ENCODE measurements at regions of chr4 and their contacts with region 1.

Region 1: GRCh38 chr4:102344954-102345794 is at the start of gene SLC39A8:
- DNase-seq: peak; percentile 96
- H3K4me3 Mint-ChIP-seq: peak within 1 kb of the TSS; percentile 88
- H3K27ac Mint-ChIP-seq: peak within 1 kb of the TSS; percentile 99
- H3K4me1 Mint-ChIP-seq: peaks cover 39% of the 10 kb centered on the region
- H3K27me3 Mint-ChIP-seq: peaks cover 7% of the 10 kb centered on the region
- total RNA-seq, gene SLC39A8: 80.4 and 81.2 TPM in 2 replicates

Region 2: GRCh38 chr4:101328063-101328602 is 1017.0 kb before region 1 on chr4:
- intact Hi-C with region 1: loop called (anchors 5 kb)
- DNase-seq: peak; percentile 76
- H3K4me3 Mint-ChIP-seq: peak overlapping the region; percentile 68
- H3K27ac Mint-ChIP-seq: peak overlapping the region; percentile 54
- H3K4me1 Mint-ChIP-seq: peaks cover 18% of the 10 kb centered on the region
- H3K27me3 Mint-ChIP-seq: peaks cover 37% of the 10 kb centered on the region

Region 3: DNA sequence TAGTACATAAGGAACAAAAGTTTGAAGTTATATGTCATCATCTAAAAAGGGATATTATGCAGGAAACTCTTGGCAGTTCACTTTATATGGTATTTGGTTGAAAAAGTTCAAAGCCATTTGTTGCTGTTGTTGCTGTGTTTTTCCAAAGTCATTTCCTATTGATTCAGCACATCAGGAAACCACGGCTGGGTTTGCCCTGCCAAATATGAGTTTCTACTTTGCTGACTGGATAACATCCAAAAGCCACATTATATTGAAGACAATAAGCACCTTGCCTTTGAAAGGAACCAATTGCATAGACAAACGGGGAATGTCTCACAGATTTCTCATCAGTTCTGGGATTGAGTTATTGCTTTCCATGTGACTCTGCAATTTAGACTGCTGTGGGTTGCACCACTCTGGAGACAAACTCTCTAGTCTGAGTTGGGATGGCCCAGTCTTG is 206.0 kb before region 1 on chr4:
- intact Hi-C with region 1: no loop called
- DNase-seq: no peak
- H3K4me3 Mint-ChIP-seq: no peak overlapping the region
- H3K27ac Mint-ChIP-seq: no peak overlapping the region
- H3K4me1 Mint-ChIP-seq: no peaks in the 10 kb centered on the region
- H3K27me3 Mint-ChIP-seq: peaks cover 5% of the 10 kb centered on the region

Region 4: DNA sequence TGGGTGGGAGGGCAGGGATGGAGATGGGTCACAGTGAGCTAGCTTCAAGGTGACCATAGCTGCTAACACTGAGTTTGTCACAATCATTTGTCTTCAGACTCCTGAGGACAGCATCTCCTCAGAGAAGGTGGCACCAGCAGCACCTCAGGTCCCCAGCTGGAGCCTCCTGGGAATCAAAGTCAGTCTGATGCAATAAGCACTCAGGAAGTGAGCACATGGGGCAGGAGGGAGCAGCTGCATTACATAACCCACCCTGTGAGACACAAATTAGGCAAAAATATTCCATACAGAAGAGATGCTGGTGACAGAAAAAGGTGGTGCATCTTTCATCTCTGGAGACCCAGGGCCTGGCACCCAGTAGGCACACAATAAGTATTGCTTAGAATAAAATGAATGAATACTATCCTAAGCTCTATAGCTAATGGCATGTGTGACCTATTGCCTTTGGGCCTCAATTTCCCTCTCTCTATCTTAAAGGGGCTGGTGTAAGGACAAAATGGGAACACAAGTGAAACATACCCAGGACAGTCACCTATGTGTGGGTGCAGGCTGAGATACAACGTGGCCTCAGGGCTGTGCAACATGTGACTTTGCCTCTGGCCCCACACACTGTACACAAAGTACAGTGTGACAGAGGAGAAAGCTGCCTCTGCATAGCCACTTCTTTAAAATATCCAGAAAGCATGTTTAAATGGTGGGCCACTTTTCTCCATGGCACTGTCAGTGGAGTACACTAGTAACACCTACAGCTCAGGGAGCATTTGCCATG is 37.0 kb before region 1 on chr4:
- intact Hi-C with region 1: loop called (anchors 5 kb)
- DNase-seq: peak; percentile 53
- H3K4me3 Mint-ChIP-seq: no peak overlapping the region
- H3K27ac Mint-ChIP-seq: peak overlapping the region; percentile 49
- H3K4me1 Mint-ChIP-seq: peaks cover 21% of the 10 kb centered on the region
- H3K27me3 Mint-ChIP-seq: no peaks in the 10 kb centered on the region

Region 5: GRCh38 chr4:102500696-102501446 is 155.7 kb after region 1 on chr4 and contains the start of gene NFKB1:
- intact Hi-C with region 1: loop called (anchors 1 kb)
- DNase-seq: peak; percentile 95
- H3K4me3 Mint-ChIP-seq: peak within 1 kb of the TSS; percentile 95
- H3K27ac Mint-ChIP-seq: peak within 1 kb of the TSS; percentile 95
- H3K4me1 Mint-ChIP-seq: peaks cover 22% of the 10 kb centered on the region
- H3K27me3 Mint-ChIP-seq: no peaks in the 10 kb centered on the region
- total RNA-seq, gene NFKB1: 146 and 148 TPM in 2 replicates

Region 6: GRCh38 chr4:102535398-102536082 is 190.4 kb after region 1 on chr4:
- intact Hi-C with region 1: no loop called
- DNase-seq: no peak
- H3K4me3 Mint-ChIP-seq: peak overlapping the region; percentile 20
- H3K27ac Mint-ChIP-seq: peak overlapping the region; percentile 37
- H3K4me1 Mint-ChIP-seq: peaks cover 40% of the 10 kb centered on the region
- H3K27me3 Mint-ChIP-seq: no peaks in the 10 kb centered on the region

Region 7: DNA sequence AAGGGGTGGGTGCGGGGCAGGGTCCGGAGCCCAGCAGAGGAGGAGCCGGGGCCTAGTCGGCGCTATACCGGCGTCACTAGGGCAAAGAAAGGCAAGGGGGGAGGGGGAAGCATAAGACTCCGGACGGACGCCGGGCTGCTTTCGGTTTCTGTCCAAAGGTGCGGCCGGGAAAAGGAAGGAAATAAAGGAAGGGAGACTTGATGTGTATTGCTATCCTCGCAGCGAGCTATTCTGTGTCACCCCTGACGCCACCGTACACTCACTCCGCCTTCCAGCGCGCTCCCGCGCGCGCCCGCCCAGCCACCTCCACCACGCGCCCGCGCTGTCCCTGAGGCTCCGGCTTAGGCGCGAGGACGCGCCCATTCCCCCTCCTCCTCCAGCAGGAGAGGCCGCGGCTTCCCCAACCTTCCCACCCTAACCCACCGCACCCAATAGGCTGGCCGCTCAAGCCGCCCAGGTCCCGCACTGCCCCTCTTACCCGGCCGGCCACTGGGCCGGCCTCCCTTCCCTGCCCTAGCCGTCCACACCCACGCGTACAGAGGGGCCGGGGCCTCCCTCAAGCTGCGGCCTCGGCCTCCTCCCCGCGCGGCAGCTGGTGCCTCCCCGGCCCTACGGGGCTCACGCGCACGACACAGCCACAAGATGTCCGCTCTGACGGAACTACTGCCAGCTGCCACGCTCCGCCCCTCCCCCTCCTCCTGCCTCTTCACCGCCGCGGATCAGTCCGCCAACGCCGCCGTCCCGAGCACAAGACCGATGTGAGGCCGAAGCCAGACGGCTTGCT is 481.9 kb after region 1 on chr4 and contains the start of gene UBE2D3:
- intact Hi-C with region 1: loop called (anchors 1 kb)
- DNase-seq: peak; percentile 98
- H3K4me3 Mint-ChIP-seq: no peak within 1 kb of the TSS
- H3K27ac Mint-ChIP-seq: no peak within 1 kb of the TSS
- H3K4me1 Mint-ChIP-seq: peaks cover 31% of the 10 kb centered on the region
- H3K27me3 Mint-ChIP-seq: no peaks in the 10 kb centered on the region
- total RNA-seq, gene UBE2D3: 488 TPM in 2 replicates

Region 8: GRCh38 chr4:103075901-103076739 is 730.9 kb after region 1 on chr4:
- intact Hi-C with region 1: loop called (anchors 2 kb)
- DNase-seq: peak; percentile 90
- H3K4me3 Mint-ChIP-seq: peak overlapping the region; percentile 88
- H3K27ac Mint-ChIP-seq: peak overlapping the region; percentile 96
- H3K4me1 Mint-ChIP-seq: peaks cover 37% of the 10 kb centered on the region
- H3K27me3 Mint-ChIP-seq: no peaks in the 10 kb centered on the region